B cell (primary cell): ENCODE measurements at regions of chr14 and their contacts with region 1.

Region 1: GRCh38 chr14:61730756-61731373 is 31.4 kb upstream of the SNAPC1 start:
- DNase-seq: peak; percentile 51
- ATAC-seq: no peak
- H3K4me3 ChIP-seq: no peak overlapping the region
- H3K4me3 Mint-ChIP-seq: no peak overlapping the region
- H3K27ac ChIP-seq: peak overlapping the region in 1 of 2 donors; percentile 50
- H3K27ac Mint-ChIP-seq: peak overlapping the region; percentile 68
- H3K4me1 ChIP-seq: peaks cover 12% of the 10 kb centered on the region in 2 donors
- H3K4me1 Mint-ChIP-seq: peaks cover 42% of the 10 kb centered on the region
- H3K27me3 ChIP-seq: no peaks in the 10 kb centered on the region
- H3K27me3 Mint-ChIP-seq: no peaks in the 10 kb centered on the region
- CTCF ChIP-seq: peak; percentile 68

Region 2: DNA sequence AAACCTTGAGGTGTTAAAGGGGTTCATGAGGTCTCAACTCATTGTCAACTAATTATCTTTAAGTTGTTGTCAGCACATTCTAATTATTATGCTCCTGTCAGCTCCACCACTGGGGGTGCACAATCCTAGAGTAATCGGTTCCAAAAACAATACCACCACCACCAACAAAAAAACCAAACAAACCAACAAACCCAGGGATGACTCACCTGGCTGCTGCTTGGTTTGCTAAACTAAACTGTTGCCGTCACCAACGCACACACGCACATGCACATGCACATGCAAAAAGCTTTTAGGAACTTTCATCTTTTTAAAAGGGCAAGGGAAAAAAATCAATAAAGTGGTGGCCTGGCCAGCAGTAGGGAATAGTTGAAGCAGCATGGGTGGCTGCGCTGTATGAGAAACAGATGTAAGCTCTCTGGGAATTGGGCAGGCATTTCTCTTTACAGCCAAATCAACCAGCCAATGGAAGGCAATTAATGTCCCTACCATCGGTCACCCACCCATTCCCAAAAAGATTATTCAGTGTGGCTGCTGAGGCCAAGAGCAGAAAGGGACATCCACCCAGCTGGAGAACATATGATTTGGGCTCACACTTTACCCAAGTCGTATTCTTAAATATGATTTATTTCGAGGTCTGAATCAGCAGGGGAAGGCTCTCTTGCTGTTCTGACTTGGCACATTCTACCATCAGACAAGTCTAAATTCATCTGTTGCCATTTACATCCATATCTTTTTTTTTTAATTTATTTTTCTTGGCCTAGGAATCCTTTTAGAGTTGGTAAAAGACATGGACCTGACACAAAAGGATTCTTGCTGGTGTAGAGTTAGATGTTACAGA is 469.7 kb before region 1 on chr14:
- CTCF ChIA-PET with region 1: no interaction called
- POLR2A ChIA-PET with region 1: no interaction called
- intact Hi-C with region 1: no loop called
- DNase-seq: no peak
- ATAC-seq: no peak
- H3K4me3 ChIP-seq: no peak overlapping the region
- H3K4me3 Mint-ChIP-seq: no peak overlapping the region
- H3K27ac ChIP-seq: no peak overlapping the region
- H3K27ac Mint-ChIP-seq: no peak overlapping the region
- H3K4me1 ChIP-seq: no peaks in the 10 kb centered on the region
- H3K4me1 Mint-ChIP-seq: no peaks in the 10 kb centered on the region
- H3K27me3 ChIP-seq: peaks cover 0 to 3% (median 0%) of the 10 kb centered on the region in 4 experiments
- H3K27me3 Mint-ChIP-seq: peaks cover 42% of the 10 kb centered on the region
- CTCF ChIP-seq: no peak

Region 3: DNA sequence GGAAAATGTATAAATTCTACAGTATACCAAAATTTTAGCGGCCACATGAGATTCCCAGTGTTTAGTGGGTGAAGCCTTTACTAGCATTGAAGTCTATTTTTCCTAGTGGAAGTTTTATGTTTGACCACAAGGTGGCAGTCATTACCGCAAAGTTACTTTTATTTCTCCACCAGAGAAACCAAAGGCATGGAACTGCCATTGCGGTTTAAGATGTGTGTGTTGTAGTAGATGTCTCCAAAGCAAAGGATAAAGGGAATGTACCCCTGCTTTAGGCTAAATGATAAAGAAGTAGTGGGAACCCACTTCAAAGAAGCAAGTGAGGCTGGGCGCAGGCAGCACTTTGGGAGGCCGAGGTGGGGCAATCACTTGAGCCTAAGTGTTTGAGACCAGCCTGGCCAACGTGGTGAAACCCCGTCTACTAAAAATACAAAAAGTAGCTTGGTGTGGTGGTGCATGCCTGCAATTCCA is 269.0 kb before region 1 on chr14:
- CTCF ChIA-PET with region 1: interaction called, 63 read pairs
- POLR2A ChIA-PET with region 1: interaction called, 3 read pairs
- intact Hi-C with region 1: loop called (anchors 1 kb)
- DNase-seq: peak; percentile 80
- ATAC-seq: peak; percentile 70
- H3K4me3 ChIP-seq: no peak overlapping the region
- H3K4me3 Mint-ChIP-seq: peak overlapping the region; percentile 21
- H3K27ac ChIP-seq: no peak overlapping the region
- H3K27ac Mint-ChIP-seq: peak overlapping the region; percentile 74
- H3K4me1 ChIP-seq: peaks cover 8 to 18% of the 10 kb centered on the region in 2 donors
- H3K4me1 Mint-ChIP-seq: peaks cover 30% of the 10 kb centered on the region
- H3K27me3 ChIP-seq: no peaks in the 10 kb centered on the region
- H3K27me3 Mint-ChIP-seq: no peaks in the 10 kb centered on the region
- CTCF ChIP-seq: peak; percentile 94

Region 4: GRCh38 chr14:61719344-61720293 is 11.2 kb before region 1 on chr14:
- CTCF ChIA-PET with region 1: interaction called, 50 read pairs
- POLR2A ChIA-PET with region 1: no interaction called
- intact Hi-C with region 1: no loop called
- DNase-seq: peak; percentile 46
- ATAC-seq: peak; percentile 37
- H3K4me3 ChIP-seq: peak overlapping the region in 4 of 5 experiments; percentile 5 to 41 (median 24)
- H3K4me3 Mint-ChIP-seq: peak overlapping the region; percentile 82
- H3K27ac ChIP-seq: peak overlapping the region; percentile 78 to 88
- H3K27ac Mint-ChIP-seq: peak overlapping the region; percentile 80
- H3K4me1 ChIP-seq: peaks cover 44 to 59% of the 10 kb centered on the region in 2 donors
- H3K4me1 Mint-ChIP-seq: peaks cover 74% of the 10 kb centered on the region
- H3K27me3 ChIP-seq: no peaks in the 10 kb centered on the region
- H3K27me3 Mint-ChIP-seq: no peaks in the 10 kb centered on the region
- CTCF ChIP-seq: no peak

Region 5: DNA sequence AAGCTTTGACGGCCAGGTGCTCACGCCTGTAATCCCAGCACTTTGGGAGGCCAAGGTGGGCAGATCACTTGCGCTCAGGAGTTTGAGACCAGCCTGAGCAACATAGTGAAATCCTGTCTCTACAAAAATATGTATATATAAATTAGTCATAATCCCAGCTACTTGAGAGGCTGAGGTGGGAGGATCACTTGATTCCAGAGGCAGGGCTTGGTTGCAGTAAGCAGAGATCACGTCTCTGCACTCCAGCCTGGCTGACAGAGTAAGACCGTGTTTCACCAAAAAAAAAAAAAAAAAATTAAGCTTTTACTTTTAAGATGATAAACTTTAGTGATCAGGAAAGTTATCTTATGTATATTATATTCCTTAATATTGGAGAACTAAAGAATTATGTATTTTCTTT is 13.4 kb after region 1 on chr14:
- CTCF ChIA-PET with region 1: interaction called, 21 read pairs
- POLR2A ChIA-PET with region 1: interaction called, 7 read pairs
- intact Hi-C with region 1: loop called (anchors 2 kb)
- DNase-seq: no peak
- ATAC-seq: no peak
- H3K4me3 ChIP-seq: no peak overlapping the region
- H3K4me3 Mint-ChIP-seq: no peak overlapping the region
- H3K27ac ChIP-seq: no peak overlapping the region
- H3K27ac Mint-ChIP-seq: no peak overlapping the region
- H3K4me1 ChIP-seq: no peaks in the 10 kb centered on the region
- H3K4me1 Mint-ChIP-seq: peaks cover 8% of the 10 kb centered on the region
- H3K27me3 ChIP-seq: no peaks in the 10 kb centered on the region
- H3K27me3 Mint-ChIP-seq: no peaks in the 10 kb centered on the region
- CTCF ChIP-seq: no peak

Region 6: DNA sequence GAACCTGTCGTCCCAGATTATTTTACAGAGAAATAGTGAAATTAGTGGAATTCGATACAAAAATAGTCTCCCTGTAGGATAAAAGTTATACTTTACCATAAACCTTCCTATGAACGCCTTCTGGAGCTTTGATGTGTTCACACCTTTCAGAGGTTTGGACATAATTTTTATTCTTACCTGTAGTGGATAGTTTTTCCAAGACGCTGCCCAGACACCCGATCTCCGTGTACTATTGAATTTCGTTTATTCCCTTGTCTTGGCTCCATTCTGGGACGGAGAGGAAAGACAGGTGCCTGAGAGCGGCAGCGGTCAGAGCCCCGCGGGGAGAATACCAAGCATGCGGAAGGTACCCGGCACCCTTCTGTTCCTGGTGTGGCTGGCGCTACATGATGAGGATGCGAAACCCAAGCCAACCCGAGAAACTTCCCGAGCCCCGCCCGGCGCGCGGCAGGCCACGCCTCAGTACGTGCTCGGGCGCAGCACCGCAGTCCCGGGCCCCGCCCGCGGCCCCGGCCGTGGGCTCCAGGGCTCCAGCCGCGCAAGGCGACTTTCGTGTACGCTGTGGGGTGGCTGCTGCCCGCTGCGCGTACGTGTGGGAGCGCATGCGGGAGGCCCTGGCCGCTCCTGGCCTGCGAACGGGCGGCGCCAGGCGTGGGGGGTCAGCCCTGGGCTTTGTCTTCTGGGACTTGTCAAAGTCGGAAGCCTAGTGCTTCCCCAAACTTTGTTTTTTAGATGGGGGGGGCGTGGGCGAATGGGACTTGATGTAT is 20.0 kb after region 1 on chr14:
- CTCF ChIA-PET with region 1: interaction called, 21 read pairs
- POLR2A ChIA-PET with region 1: interaction called, 7 read pairs
- intact Hi-C with region 1: loop called (anchors 2 kb)
- DNase-seq: peak; percentile 91
- ATAC-seq: peak; percentile 91
- H3K4me3 ChIP-seq: peak overlapping the region; percentile 47 to 71 (median 59)
- H3K4me3 Mint-ChIP-seq: peak overlapping the region; percentile 92
- H3K27ac ChIP-seq: peak overlapping the region; percentile 47 to 73
- H3K27ac Mint-ChIP-seq: peak overlapping the region; percentile 93
- H3K4me1 ChIP-seq: peaks cover 25 to 27% of the 10 kb centered on the region in 2 donors
- H3K4me1 Mint-ChIP-seq: peaks cover 42% of the 10 kb centered on the region
- H3K27me3 ChIP-seq: no peaks in the 10 kb centered on the region
- H3K27me3 Mint-ChIP-seq: no peaks in the 10 kb centered on the region
- CTCF ChIP-seq: no peak